Activated CD8-positive, alpha-beta T cell treated with anti-CD3 and anti-CD28 coated beads, Interleukin-2, amount 10 ng/mL, durations not matched to agents 7 days and 5 days (primary cell): ENCODE measurements at regions of chr12 and their contacts with region 1.

Region 1: GRCh38 chr12:93441617-93442410 is at the start of gene UBE2N:
- DNase-seq: peak; percentile 96
- ATAC-seq: peak; percentile 86
- H3K4me3 Mint-ChIP-seq: peak within 1 kb of the TSS; percentile 91
- H3K27ac Mint-ChIP-seq: peak within 1 kb of the TSS; percentile 99
- H3K4me1 Mint-ChIP-seq: peaks cover 48% of the 10 kb centered on the region
- H3K27me3 Mint-ChIP-seq: no peaks in the 10 kb centered on the region
- total RNA-seq, gene UBE2N: 183 to 194 TPM

Region 2: DNA sequence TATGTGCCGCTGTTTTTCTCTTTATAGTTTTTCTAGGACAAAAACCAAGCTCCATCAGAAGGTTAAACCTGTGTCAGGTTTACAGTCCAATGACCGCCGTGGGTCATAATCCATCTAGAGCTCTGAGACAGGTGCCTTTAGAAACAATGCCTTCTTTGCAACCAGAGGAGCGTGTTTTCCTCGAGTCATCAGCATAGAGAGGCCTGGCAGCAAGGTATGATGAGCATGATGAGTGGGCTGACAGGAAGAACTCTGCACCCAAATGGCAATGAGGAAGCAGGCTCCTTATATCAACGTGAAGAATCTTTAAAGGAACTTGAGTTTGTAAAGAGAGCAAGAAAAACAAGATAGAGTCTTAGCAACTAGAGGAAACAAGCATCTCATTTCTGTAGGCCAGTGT is 124.6 kb before region 1 on chr12:
- CTCF ChIA-PET with region 1: no interaction called
- POLR2A ChIA-PET with region 1: no interaction called
- DNase-seq: no peak
- ATAC-seq: no peak
- H3K4me3 Mint-ChIP-seq: no peak overlapping the region
- H3K27ac Mint-ChIP-seq: no peak overlapping the region
- H3K4me1 Mint-ChIP-seq: no peaks in the 10 kb centered on the region
- H3K27me3 Mint-ChIP-seq: no peaks in the 10 kb centered on the region

Region 3: DNA sequence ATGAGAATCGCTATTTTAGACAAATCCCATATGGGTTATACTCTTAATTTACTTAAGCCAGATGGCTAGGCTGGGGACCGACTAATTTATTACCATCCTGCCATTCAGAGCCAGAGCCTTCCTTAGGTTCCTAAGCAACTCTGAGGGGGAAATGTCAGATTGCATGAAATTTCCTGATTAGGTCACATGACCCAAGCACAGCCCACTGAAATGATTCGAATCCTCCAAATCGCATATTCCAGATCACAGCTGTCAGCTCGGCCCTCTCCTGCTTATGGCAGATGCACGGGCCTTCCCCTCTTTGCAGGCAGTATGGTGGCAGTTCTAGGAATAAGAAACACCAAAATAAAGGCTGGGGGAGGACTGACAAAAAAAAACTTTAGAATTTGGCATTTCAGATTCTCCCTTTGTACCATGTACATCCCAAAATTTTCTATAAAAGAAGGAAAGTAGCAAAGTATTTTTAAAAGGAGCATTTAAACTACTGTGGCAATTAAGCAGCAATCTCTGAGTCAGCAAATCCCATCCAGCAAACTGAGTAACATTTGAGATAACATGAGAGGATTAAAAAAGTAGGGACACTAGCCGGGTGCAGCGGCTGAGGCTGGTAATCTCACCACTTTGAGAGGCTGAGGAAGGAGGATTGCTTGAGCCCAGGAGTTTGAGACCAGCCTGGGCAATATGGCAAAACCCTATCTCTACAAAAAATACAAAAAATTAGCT is 94.6 kb before region 1 on chr12:
- CTCF ChIA-PET with region 1: no interaction called
- POLR2A ChIA-PET with region 1: no interaction called
- DNase-seq: no peak
- ATAC-seq: no peak
- H3K4me3 Mint-ChIP-seq: no peak overlapping the region
- H3K27ac Mint-ChIP-seq: no peak overlapping the region
- H3K4me1 Mint-ChIP-seq: no peaks in the 10 kb centered on the region
- H3K27me3 Mint-ChIP-seq: peaks cover under 1% of the 10 kb centered on the region

Region 4: DNA sequence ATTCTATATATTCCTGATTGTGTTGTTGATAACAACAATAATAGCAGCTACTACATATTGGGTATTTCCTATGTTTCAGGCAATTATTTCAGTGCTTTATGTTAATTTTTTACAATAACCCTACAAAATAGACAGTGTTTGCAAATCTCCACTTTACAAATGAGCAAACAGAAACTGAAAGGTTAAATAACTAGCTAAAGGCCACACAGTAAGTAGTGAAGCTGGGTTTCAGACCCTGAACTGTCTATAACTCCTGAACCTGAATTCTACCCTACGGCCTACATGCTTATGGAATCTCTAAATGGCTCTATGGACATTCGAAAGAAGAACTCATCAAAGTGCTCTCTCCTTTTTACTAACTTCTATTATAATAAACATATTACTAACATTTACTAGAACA is 83.8 kb before region 1 on chr12:
- CTCF ChIA-PET with region 1: no interaction called
- POLR2A ChIA-PET with region 1: no interaction called
- DNase-seq: no peak
- ATAC-seq: no peak
- H3K4me3 Mint-ChIP-seq: no peak overlapping the region
- H3K27ac Mint-ChIP-seq: no peak overlapping the region
- H3K4me1 Mint-ChIP-seq: peaks cover 13% of the 10 kb centered on the region
- H3K27me3 Mint-ChIP-seq: no peaks in the 10 kb centered on the region

Region 5: GRCh38 chr12:93390549-93391297 is 51.1 kb before region 1 on chr12:
- CTCF ChIA-PET with region 1: no interaction called
- POLR2A ChIA-PET with region 1: no interaction called
- DNase-seq: no peak
- ATAC-seq: no peak
- H3K4me3 Mint-ChIP-seq: no peak overlapping the region
- H3K27ac Mint-ChIP-seq: no peak overlapping the region
- H3K4me1 Mint-ChIP-seq: peaks cover 18% of the 10 kb centered on the region
- H3K27me3 Mint-ChIP-seq: no peaks in the 10 kb centered on the region

Region 6: DNA sequence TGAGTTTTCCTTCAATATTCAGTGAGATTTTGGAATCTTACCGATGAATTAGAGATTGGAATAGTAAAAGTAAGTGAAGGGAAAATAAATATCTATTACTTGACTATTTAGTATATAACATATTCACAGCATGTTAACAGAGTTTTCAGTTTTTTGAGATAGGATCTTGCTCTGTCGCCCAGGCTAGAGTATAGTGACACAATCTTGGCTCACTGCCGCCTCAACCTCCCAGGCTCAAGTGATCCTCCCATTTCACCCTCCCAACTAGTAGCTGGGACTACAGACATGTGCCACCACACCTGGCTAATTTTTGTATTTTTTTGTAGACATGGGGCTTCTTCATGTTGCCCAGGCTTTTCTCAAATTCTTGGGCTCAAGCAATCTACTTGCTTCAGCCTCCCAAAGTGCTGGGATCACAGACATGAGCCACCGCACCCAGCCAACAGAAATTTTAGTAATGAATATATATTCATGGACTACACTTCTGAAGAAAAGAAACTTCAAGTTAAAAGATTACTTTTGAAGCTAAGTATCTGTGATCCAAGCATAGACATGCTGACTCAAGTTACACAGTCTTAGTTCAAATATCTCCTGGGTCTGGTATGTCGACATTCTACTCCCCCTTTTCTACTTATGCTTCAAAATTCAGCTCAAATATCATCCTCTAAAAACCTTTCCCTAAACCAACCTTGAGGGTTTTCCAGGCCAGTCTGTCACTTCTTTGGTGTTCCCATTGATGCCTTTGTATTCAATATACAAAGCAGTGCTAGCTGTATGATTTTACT is 13.8 kb before region 1 on chr12:
- CTCF ChIA-PET with region 1: interaction called, 3 read pairs
- POLR2A ChIA-PET with region 1: interaction called, 10 read pairs
- DNase-seq: no peak
- ATAC-seq: no peak
- H3K4me3 Mint-ChIP-seq: no peak overlapping the region
- H3K27ac Mint-ChIP-seq: no peak overlapping the region
- H3K4me1 Mint-ChIP-seq: peaks cover 57% of the 10 kb centered on the region
- H3K27me3 Mint-ChIP-seq: no peaks in the 10 kb centered on the region

Region 7: GRCh38 chr12:93467351-93468007 is 25.7 kb after region 1 on chr12 and contains the start of gene MRPL42:
- CTCF ChIA-PET with region 1: interaction called, 4 read pairs
- POLR2A ChIA-PET with region 1: interaction called, 17 read pairs
- DNase-seq: peak; percentile 94
- ATAC-seq: peak; percentile 90
- H3K4me3 Mint-ChIP-seq: peak within 1 kb of the TSS; percentile 94
- H3K27ac Mint-ChIP-seq: peak within 1 kb of the TSS; percentile 97
- H3K4me1 Mint-ChIP-seq: peaks cover 30% of the 10 kb centered on the region
- H3K27me3 Mint-ChIP-seq: no peaks in the 10 kb centered on the region
- total RNA-seq, gene MRPL42: 55.8 to 57.0 TPM